Endothelial cell of umbilical vein (primary cell): ENCODE measurements at regions of chr1 and their contacts with region 1.

Region 1: GRCh38 chr1:174726167-174726879 is 273.4 kb upstream of the CACYBP start:
- DNase-seq: peak; percentile 25
- H3K4me3 ChIP-seq: no peak overlapping the region
- H3K27ac ChIP-seq: no peak overlapping the region
- H3K4me1 ChIP-seq: no peaks in the 10 kb centered on the region
- H3K27me3 ChIP-seq: no peaks in the 10 kb centered on the region
- CTCF ChIP-seq: peak in 1 of 2 donors; percentile 19
- POLR2A ChIP-seq: no peak

Region 2: DNA sequence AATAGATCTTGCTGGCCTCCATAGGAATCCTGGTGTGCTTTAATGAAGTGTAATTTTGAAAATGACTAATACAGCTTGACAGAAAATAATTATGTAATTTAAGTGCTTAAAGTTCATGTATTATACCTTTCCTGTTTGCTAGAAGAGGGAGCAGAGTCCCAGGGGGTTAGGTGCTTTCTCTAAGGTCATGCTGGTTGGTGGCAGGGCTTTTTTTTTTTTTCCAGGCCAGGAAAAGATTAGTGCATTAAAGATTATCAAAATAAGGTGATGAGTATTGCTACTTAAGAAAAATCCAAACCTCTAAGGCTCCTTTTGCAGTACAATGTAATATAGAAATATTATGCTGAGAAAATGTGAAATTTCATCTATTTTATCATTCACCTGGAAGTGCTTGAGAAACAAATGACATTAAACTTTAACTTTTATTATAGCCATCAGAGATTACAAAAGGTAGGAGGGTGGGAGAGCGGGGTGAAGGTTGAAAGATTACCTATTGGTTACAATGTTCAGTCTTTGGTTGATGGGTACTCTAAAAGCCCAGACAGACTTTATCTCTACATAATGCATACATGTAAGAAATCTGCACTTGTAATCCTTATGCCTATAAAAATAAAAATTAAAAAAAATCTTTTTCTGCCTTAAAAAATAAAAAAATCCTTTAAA is 456.2 kb before region 1 on chr1:
- CTCF ChIA-PET with region 1: interaction called, 20 read pairs
- POLR2A ChIA-PET with region 1: no interaction called
- dilution Hi-C with region 1: loop called (anchors 10 kb)
- intact Hi-C with region 1: no loop called
- DNase-seq: no peak
- H3K4me3 ChIP-seq: no peak overlapping the region
- H3K27ac ChIP-seq: no peak overlapping the region
- H3K4me1 ChIP-seq: no peaks in the 10 kb centered on the region
- H3K27me3 ChIP-seq: no peaks in the 10 kb centered on the region
- CTCF ChIP-seq: no peak
- POLR2A ChIP-seq: no peak

Region 3: DNA sequence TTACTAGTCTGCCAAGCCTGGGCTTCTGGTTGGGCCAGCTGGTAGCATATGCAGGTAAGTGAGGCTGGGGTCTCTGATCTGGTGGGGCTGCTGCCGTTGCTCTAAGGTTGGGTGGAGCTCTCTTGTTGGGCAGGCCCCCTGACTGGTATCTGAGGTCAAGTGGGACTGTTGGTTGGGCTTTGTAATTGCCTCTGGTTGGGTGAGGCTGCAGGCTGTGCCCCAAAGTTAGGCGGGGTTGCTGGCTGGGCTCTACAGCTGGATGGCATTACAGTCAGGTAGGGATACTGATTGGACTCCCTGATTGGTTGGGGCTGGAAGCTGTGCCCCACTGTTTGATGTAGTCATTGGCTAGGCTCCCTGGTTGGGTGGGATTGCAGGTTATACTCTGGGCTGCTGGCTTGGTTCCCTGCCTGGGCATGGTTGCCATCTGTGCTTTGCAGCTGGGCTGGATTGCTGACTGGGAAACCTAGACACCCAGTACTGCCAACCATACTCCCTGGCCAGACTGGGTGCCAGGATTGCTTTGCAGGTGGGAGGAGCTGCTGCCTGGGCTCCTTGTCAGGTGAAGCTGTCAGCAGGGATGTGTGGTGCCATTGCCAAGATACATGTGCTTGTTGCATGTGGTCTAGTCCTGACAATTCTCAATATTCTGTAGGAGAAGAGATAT is 436.5 kb before region 1 on chr1:
- CTCF ChIA-PET with region 1: interaction called, 14 read pairs
- POLR2A ChIA-PET with region 1: no interaction called
- dilution Hi-C with region 1: no loop called
- intact Hi-C with region 1: no loop called
- DNase-seq: no peak
- H3K4me3 ChIP-seq: no peak overlapping the region
- H3K27ac ChIP-seq: no peak overlapping the region
- H3K4me1 ChIP-seq: peaks cover 4% of the 10 kb centered on the region
- H3K27me3 ChIP-seq: no peaks in the 10 kb centered on the region
- CTCF ChIP-seq: no peak
- POLR2A ChIP-seq: no peak

Region 4: GRCh38 chr1:174713796-174714195 is 12.5 kb before region 1 on chr1:
- CTCF ChIA-PET with region 1: interaction called, 25 read pairs
- POLR2A ChIA-PET with region 1: no interaction called
- dilution Hi-C with region 1: no loop called
- intact Hi-C with region 1: no loop called
- DNase-seq: peak; percentile 39
- H3K4me3 ChIP-seq: no peak overlapping the region
- H3K27ac ChIP-seq: no peak overlapping the region
- H3K4me1 ChIP-seq: no peaks in the 10 kb centered on the region
- H3K27me3 ChIP-seq: no peaks in the 10 kb centered on the region
- CTCF ChIP-seq: no peak
- POLR2A ChIP-seq: no peak

Region 5: DNA sequence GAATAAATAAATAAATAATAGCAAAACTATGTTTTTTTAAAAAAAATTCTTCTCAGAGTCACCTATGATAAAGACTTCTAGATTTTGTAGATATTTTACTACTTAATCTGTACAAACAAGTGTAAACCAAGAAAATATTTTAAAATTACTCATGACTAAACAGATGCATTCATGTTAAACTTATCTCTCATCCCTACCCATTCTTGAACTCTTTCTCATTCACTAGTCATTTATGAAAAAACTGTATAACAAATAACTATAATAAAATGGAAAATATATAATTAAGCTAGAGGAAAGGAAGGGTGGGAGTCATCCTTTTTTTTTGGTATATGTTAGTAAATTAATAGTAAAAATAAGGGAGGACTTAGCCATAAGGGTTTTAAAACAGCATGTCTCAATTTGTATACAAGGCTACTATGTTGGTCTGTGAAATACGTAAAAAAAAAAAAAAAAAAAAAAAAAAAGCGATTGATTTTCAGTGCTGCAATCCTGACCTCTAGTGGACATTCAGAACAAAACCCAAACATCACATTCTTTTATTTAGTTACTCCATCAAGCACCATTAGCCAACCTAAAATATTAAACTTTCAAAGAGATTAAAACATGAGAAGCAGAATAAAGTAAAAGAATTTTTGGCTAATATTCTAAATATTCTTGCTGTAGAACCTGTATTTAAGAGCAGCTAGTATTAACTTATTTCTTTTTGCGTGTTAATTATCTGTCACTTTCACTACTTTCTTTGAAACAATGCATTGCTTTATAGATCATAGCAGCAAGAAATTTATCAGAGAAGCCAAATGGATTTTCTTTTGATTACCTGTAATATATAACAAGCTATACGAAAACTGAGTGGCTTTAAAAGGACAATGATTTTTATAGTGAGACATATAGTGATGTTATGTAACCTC is 17.6 kb after region 1 on chr1:
- CTCF ChIA-PET with region 1: interaction called, 13 read pairs
- POLR2A ChIA-PET with region 1: no interaction called
- dilution Hi-C with region 1: no loop called
- intact Hi-C with region 1: no loop called
- DNase-seq: peak; percentile 52
- H3K4me3 ChIP-seq: no peak overlapping the region
- H3K27ac ChIP-seq: no peak overlapping the region
- H3K4me1 ChIP-seq: no peaks in the 10 kb centered on the region
- H3K27me3 ChIP-seq: no peaks in the 10 kb centered on the region
- CTCF ChIP-seq: peak; percentile 26 to 47
- POLR2A ChIP-seq: no peak

Region 6: DNA sequence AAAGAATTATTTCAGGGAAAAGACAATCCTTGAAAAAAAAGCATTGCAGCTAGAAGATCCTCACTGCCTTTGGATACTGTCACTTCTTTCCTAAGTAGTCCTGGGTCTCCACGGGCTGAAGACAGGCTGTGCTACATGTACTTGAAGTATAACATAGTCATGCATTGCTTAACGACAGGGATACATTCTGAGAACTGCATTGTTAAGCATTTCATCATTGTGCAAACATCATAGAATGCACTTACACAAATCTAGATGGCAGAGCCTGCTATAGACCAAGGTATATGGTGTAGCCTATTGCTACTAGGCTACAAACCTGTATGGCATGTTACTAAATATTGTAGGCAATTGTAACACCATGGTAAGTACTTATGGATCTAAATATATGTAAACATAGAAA is 412.3 kb after region 1 on chr1:
- CTCF ChIA-PET with region 1: no interaction called
- POLR2A ChIA-PET with region 1: no interaction called
- dilution Hi-C with region 1: no loop called
- intact Hi-C with region 1: no loop called
- DNase-seq: no peak
- H3K4me3 ChIP-seq: no peak overlapping the region
- H3K27ac ChIP-seq: no peak overlapping the region
- H3K4me1 ChIP-seq: no peaks in the 10 kb centered on the region
- H3K27me3 ChIP-seq: peaks cover 2 to 5% of the 10 kb centered on the region in 2 experiments
- CTCF ChIP-seq: no peak
- POLR2A ChIP-seq: no peak